ENCODE measurements at regions of chr19 and their contacts with region 1.

Region 1: GRCh38 chr19:44770550-44771257 is 7.0 kb upstream of the CBLC start:
- DNase-seq: peak; percentile 99
- ATAC-seq: peak; percentile 100
- H3K4me3 Mint-ChIP-seq: no peak overlapping the region; the same call in 1 of the 2 replicates
- H3K27ac Mint-ChIP-seq: 0 out of 2 replicates have a peak overlapping the region, but pooled peaks have one; percentile 60
- H3K4me1 Mint-ChIP-seq: peaks cover 6% of the 10 kb centered on the region
- H3K27me3 Mint-ChIP-seq: peaks cover 36% of the 10 kb centered on the region
- CTCF ChIP-seq: peak; percentile 82

Region 2: GRCh38 chr19:44576843-44577565 is 193.7 kb before region 1 on chr19:
- CTCF ChIA-PET with region 1: interaction called, 16 read pairs
- POLR2A ChIA-PET with region 1: no interaction called
- DNase-seq: peak; percentile 64
- ATAC-seq: peak; percentile 94
- H3K4me3 Mint-ChIP-seq: no peak overlapping the region
- H3K27ac Mint-ChIP-seq: no peak overlapping the region
- H3K4me1 Mint-ChIP-seq: peaks cover 16% of the 10 kb centered on the region
- H3K27me3 Mint-ChIP-seq: peaks cover 3% of the 10 kb centered on the region
- CTCF ChIP-seq: peak; percentile 28

Region 3: GRCh38 chr19:44689056-44689895 is 81.4 kb before region 1 on chr19:
- CTCF ChIA-PET with region 1: interaction called, 128 read pairs
- POLR2A ChIA-PET with region 1: no interaction called
- DNase-seq: peak; percentile 94
- ATAC-seq: peak; percentile 84
- H3K4me3 Mint-ChIP-seq: peak overlapping the region; percentile 11; the same call in 1 of the 2 replicates
- H3K27ac Mint-ChIP-seq: no peak overlapping the region
- H3K4me1 Mint-ChIP-seq: peaks cover 22% of the 10 kb centered on the region
- H3K27me3 Mint-ChIP-seq: no peaks in the 10 kb centered on the region
- CTCF ChIP-seq: peak; percentile 97

Region 4: GRCh38 chr19:44723952-44724319 is 46.8 kb before region 1 on chr19:
- CTCF ChIA-PET with region 1: interaction called, 548 read pairs
- POLR2A ChIA-PET with region 1: interaction called, 11 read pairs
- DNase-seq: peak; percentile 89
- ATAC-seq: peak; percentile 86
- H3K4me3 Mint-ChIP-seq: no peak overlapping the region
- H3K27ac Mint-ChIP-seq: no peak overlapping the region
- H3K4me1 Mint-ChIP-seq: peaks cover 26% of the 10 kb centered on the region
- H3K27me3 Mint-ChIP-seq: peaks cover 4% of the 10 kb centered on the region
- CTCF ChIP-seq: peak; percentile 94

Region 5: GRCh38 chr19:44752816-44753618 is 17.7 kb before region 1 on chr19:
- CTCF ChIA-PET with region 1: interaction called, 85 read pairs
- POLR2A ChIA-PET with region 1: interaction called, 6 read pairs
- DNase-seq: peak; percentile 72
- ATAC-seq: peak; percentile 27
- H3K4me3 Mint-ChIP-seq: peak overlapping the region; percentile 71
- H3K27ac Mint-ChIP-seq: no peak overlapping the region
- H3K4me1 Mint-ChIP-seq: peaks cover 30% of the 10 kb centered on the region
- H3K27me3 Mint-ChIP-seq: peaks cover 87% of the 10 kb centered on the region
- CTCF ChIP-seq: no peak

Region 6: GRCh38 chr19:44845612-44846454 is 75.1 kb after region 1 on chr19 and contains the start of gene NECTIN2:
- CTCF ChIA-PET with region 1: interaction called, 20 read pairs
- POLR2A ChIA-PET with region 1: interaction called, 3 read pairs
- DNase-seq: peak; percentile 100
- ATAC-seq: peak; percentile 59
- H3K4me3 Mint-ChIP-seq: peak within 1 kb of the TSS; percentile 97
- H3K27ac Mint-ChIP-seq: peak within 1 kb of the TSS; percentile 99
- H3K4me1 Mint-ChIP-seq: peaks cover 23% of the 10 kb centered on the region
- H3K27me3 Mint-ChIP-seq: peaks cover 14% of the 10 kb centered on the region
- CTCF ChIP-seq: peak; percentile 57
- total RNA-seq, gene NECTIN2: 164 to 170 TPM (median 168 TPM) in 3 replicates

Measured in WTC11 (cell line).